GM12878 (cell line): ENCODE measurements at regions of chr18 and their contacts with region 1.

Region 1: DNA sequence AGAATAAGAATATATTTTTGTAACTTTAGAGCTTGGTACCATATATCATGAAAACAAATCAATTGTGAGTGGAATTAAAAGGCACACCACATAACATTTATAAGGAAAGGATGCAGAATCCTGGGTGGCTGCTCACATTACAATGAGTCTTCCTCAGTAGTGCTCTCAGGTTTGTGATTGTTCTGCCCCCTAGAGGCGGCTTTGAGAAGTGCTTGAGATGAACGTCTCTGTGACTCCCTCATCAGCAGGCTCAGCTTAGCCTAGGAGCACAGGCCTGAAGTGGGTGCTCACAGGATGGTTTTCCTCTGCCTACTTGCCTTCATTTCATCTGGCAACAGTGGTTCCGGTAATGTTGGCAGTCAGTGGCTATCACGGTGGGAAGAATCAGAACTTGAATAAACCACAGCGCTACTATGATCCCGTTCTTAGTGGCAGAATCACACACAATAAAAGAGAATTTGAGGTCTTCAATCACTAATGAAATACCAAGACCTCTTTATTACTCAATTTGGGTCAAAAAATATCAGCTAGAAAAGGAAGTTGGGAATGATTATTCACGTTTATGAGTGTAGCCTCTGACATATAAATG is 38.1 kb upstream of the B4GALT6 start:
- DNase-seq: peak; percentile 43
- ATAC-seq: peak; percentile 100
- H3K4me3 ChIP-seq: no peak overlapping the region
- H3K27ac ChIP-seq: no peak overlapping the region
- H3K4me1 ChIP-seq: no peaks in the 10 kb centered on the region
- H3K27me3 ChIP-seq: no peaks in the 10 kb centered on the region
- CTCF ChIP-seq: peak; percentile 88 to 92 (median 90)
- EP300 ChIP-seq: no peak
- POLR2A ChIP-seq: no peak
- RAD21 ChIP-seq: peak; percentile 89

Region 2: DNA sequence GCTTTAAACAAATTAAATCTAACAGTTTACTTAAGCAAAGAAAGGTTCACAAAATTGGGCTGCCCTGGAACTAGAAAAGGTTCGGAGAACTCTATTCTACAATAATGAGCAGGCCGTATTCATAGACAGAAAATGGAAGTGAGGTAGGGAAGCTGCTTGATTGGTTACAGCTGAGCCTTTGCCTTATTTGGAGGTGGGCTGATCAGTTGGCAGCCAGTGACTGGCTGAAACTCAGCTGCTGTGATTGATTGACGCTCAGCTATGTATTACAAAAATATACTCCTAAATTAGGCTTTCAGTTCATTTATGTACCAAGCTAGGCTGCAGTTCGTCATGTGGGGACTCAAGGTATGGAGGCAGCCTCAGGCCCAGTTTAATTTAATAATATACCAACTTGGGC is 173.0 kb before region 1 on chr18:
- CTCF ChIA-PET with region 1: interaction called, 224 read pairs
- POLR2A ChIA-PET with region 1: no interaction called
- RAD21 ChIA-PET with region 1: interaction called, 67 read pairs
- SMC1A ChIA-PET with region 1: interaction called, 77 read pairs
- in situ Hi-C with region 1: no loop called
- intact Hi-C with region 1: no loop called
- DNase-seq: no peak
- ATAC-seq: peak; percentile 51
- H3K4me3 ChIP-seq: no peak overlapping the region
- H3K27ac ChIP-seq: no peak overlapping the region
- H3K4me1 ChIP-seq: no peaks in the 10 kb centered on the region
- H3K27me3 ChIP-seq: no peaks in the 10 kb centered on the region
- CTCF ChIP-seq: no peak
- EP300 ChIP-seq: no peak
- POLR2A ChIP-seq: no peak
- RAD21 ChIP-seq: no peak

Region 3: GRCh38 chr18:31576670-31577069 is 145.8 kb before region 1 on chr18:
- CTCF ChIA-PET with region 1: interaction called, 20 read pairs
- POLR2A ChIA-PET with region 1: no interaction called
- RAD21 ChIA-PET with region 1: interaction called, 4 read pairs
- SMC1A ChIA-PET with region 1: interaction called, 3 read pairs
- in situ Hi-C with region 1: no loop called
- intact Hi-C with region 1: no loop called
- DNase-seq: no peak
- ATAC-seq: no peak
- H3K4me3 ChIP-seq: no peak overlapping the region
- H3K27ac ChIP-seq: no peak overlapping the region
- H3K4me1 ChIP-seq: peaks cover 6% of the 10 kb centered on the region
- H3K27me3 ChIP-seq: no peaks in the 10 kb centered on the region
- CTCF ChIP-seq: no peak
- EP300 ChIP-seq: no peak
- POLR2A ChIP-seq: no peak
- RAD21 ChIP-seq: no peak

Region 4: DNA sequence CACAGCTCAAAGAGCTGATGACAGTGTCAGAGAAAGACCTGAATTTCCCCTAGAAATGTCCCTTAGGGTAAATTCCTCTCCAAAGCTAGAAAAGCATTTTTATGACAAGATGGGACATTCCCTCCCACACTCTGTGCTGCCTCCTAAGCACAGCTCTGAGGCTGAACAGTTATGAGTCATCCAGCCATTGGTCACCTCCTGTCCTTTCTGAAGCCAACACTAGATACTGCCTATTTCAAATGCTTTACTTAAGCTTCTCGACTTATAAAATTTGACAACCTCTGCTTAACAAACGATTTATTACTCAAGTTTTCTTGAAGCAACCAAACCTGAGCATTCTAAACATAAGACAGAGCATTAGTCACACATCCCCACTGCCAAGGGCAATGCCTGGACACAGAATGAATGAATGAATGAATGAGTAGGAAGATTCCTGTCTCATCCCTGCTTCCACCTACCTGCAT is 73.5 kb before region 1 on chr18:
- CTCF ChIA-PET with region 1: interaction called, 13 read pairs
- POLR2A ChIA-PET with region 1: interaction called, 6 read pairs
- RAD21 ChIA-PET with region 1: interaction called, 14 read pairs
- SMC1A ChIA-PET with region 1: interaction called, 23 read pairs
- in situ Hi-C with region 1: no loop called
- intact Hi-C with region 1: no loop called
- DNase-seq: peak; percentile 85
- ATAC-seq: peak; percentile 77
- H3K4me3 ChIP-seq: peak overlapping the region; percentile 25; the same call in 1 of the 2 replicates
- H3K27ac ChIP-seq: peak overlapping the region; percentile 88
- H3K4me1 ChIP-seq: peaks cover 70% of the 10 kb centered on the region
- H3K27me3 ChIP-seq: no peaks in the 10 kb centered on the region
- CTCF ChIP-seq: no peak
- EP300 ChIP-seq: peak; percentile 65 to 85; a peak in 2 of 4 replicates
- POLR2A ChIP-seq: 0 out of 2 replicates have a peak, but pooled peaks have one; percentile 31
- RAD21 ChIP-seq: peak; percentile 1; the same call in 1 of the 2 replicates

Region 5: GRCh38 chr18:31685097-31686082 is 37.1 kb before region 1 on chr18:
- CTCF ChIA-PET with region 1: interaction called, 20 read pairs
- POLR2A ChIA-PET with region 1: no interaction called
- RAD21 ChIA-PET with region 1: interaction called, 5 read pairs
- SMC1A ChIA-PET with region 1: interaction called, 11 read pairs
- in situ Hi-C with region 1: no loop called
- intact Hi-C with region 1: no loop called
- DNase-seq: peak; percentile 40
- ATAC-seq: peak; percentile 71
- H3K4me3 ChIP-seq: peak overlapping the region; percentile 75
- H3K27ac ChIP-seq: peak overlapping the region; percentile 88
- H3K4me1 ChIP-seq: peaks cover 13% of the 10 kb centered on the region
- H3K27me3 ChIP-seq: no peaks in the 10 kb centered on the region
- CTCF ChIP-seq: peak; percentile 42 to 48 (median 47); a peak in 4 of 6 replicates
- EP300 ChIP-seq: no peak
- POLR2A ChIP-seq: peak; percentile 79
- RAD21 ChIP-seq: 0 out of 2 replicates have a peak, but pooled peaks have one; percentile 15

Region 6: GRCh38 chr18:31710826-31711225 is 11.6 kb before region 1 on chr18:
- CTCF ChIA-PET with region 1: interaction called, 13 read pairs
- POLR2A ChIA-PET with region 1: no interaction called
- RAD21 ChIA-PET with region 1: interaction called, 3 read pairs
- SMC1A ChIA-PET with region 1: interaction called, 6 read pairs
- in situ Hi-C with region 1: no loop called
- intact Hi-C with region 1: no loop called
- DNase-seq: no peak
- ATAC-seq: peak; percentile 92
- H3K4me3 ChIP-seq: no peak overlapping the region
- H3K27ac ChIP-seq: no peak overlapping the region
- H3K4me1 ChIP-seq: no peaks in the 10 kb centered on the region
- H3K27me3 ChIP-seq: no peaks in the 10 kb centered on the region
- CTCF ChIP-seq: peak; percentile 20 to 42 (median 23); a peak in 5 of 6 replicates
- EP300 ChIP-seq: no peak
- POLR2A ChIP-seq: no peak
- RAD21 ChIP-seq: peak; percentile 31

Region 7: GRCh38 chr18:31977270-31977872 is 254.9 kb after region 1 on chr18:
- CTCF ChIA-PET with region 1: interaction called, 12 read pairs
- POLR2A ChIA-PET with region 1: no interaction called
- RAD21 ChIA-PET with region 1: interaction called, 5 read pairs
- SMC1A ChIA-PET with region 1: interaction called, 6 read pairs
- in situ Hi-C with region 1: no loop called
- intact Hi-C with region 1: no loop called
- DNase-seq: no peak
- ATAC-seq: peak; percentile 80
- H3K4me3 ChIP-seq: no peak overlapping the region
- H3K27ac ChIP-seq: no peak overlapping the region
- H3K4me1 ChIP-seq: no peaks in the 10 kb centered on the region
- H3K27me3 ChIP-seq: no peaks in the 10 kb centered on the region
- CTCF ChIP-seq: peak; percentile 49 to 65 (median 50); a peak in 5 of 6 replicates
- EP300 ChIP-seq: no peak
- POLR2A ChIP-seq: no peak
- RAD21 ChIP-seq: peak; percentile 74

Region 8: GRCh38 chr18:33421225-33421624 is 1698.8 kb after region 1 on chr18:
- CTCF ChIA-PET with region 1: no interaction called
- POLR2A ChIA-PET with region 1: no interaction called
- RAD21 ChIA-PET with region 1: no interaction called
- SMC1A ChIA-PET with region 1: no interaction called
- in situ Hi-C with region 1: no loop called
- intact Hi-C with region 1: no loop called
- DNase-seq: no peak
- ATAC-seq: no peak
- H3K4me3 ChIP-seq: no peak overlapping the region
- H3K27ac ChIP-seq: no peak overlapping the region
- H3K4me1 ChIP-seq: no peaks in the 10 kb centered on the region
- H3K27me3 ChIP-seq: no peaks in the 10 kb centered on the region
- CTCF ChIP-seq: no peak
- EP300 ChIP-seq: no peak
- POLR2A ChIP-seq: no peak
- RAD21 ChIP-seq: no peak